Thyroid gland (tissue), 4 donors: ENCODE measurements at regions of chr1 and their contacts with region 1.

Region 1: GRCh38 chr1:43763497-43763973 is 56.2 kb downstream of the ST3GAL3 start:
- DNase-seq: peak; percentile 77 to 80
- H3K4me3 ChIP-seq: no peak overlapping the region
- H3K27ac ChIP-seq: no peak overlapping the region
- H3K4me1 ChIP-seq: peaks cover 15 to 24% of the 10 kb centered on the region in 2 donors
- H3K27me3 ChIP-seq: no peaks in the 10 kb centered on the region
- CTCF ChIP-seq: peak; percentile 57 to 96 (median 88)
- POLR2A ChIP-seq: no peak

Region 2: DNA sequence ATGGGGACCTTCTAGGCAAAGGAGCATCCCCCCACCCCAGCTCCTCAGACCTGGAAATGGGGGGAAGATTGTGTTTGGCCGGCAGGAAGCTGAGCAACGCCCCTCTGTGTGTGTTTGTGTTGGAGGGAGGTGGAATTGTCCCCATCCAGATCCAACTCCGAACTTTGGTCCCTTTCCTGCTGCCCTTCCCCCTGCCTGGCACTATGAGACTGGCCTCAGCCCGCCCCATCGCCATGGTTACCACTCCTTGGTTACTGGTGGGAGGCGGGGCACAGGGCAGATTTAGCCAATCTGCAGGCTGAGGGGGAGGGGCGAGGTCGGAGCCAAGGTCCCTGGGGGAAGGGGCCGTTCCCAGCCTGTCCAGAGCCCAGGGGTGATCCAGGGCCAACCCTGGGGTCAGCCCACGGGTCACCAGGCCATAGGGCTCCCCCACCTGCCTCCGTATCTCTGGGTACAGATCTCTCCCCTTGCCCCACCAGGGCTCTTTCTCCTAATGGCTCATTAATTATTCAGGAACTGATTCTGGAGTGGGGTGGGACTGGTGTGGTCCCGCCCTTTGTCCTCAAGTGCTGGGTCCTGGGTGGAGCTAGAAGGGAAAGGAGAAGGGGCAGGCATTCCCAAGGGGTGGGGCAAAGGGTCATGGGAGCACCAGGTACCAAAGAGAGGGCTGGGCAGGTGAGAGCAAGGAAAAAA is 217.7 kb before region 1 on chr1:
- intact Hi-C with region 1: no loop called
- DNase-seq: peak; percentile 84 to 88
- H3K4me3 ChIP-seq: no peak overlapping the region
- H3K27ac ChIP-seq: peak overlapping the region in 1 of 3 donors; percentile 3
- H3K4me1 ChIP-seq: peaks cover 33 to 89% of the 10 kb centered on the region in 2 donors
- H3K27me3 ChIP-seq: no peaks in the 10 kb centered on the region
- CTCF ChIP-seq: no peak
- POLR2A ChIP-seq: no peak

Region 3: GRCh38 chr1:43934101-43934985 is 170.8 kb after region 1 on chr1:
- intact Hi-C with region 1: loop called (anchors 2 kb)
- DNase-seq: peak; percentile 52 to 53
- H3K4me3 ChIP-seq: peak overlapping the region in 1 of 3 donors; percentile 23
- H3K27ac ChIP-seq: no peak overlapping the region
- H3K4me1 ChIP-seq: peaks cover 10 to 35% of the 10 kb centered on the region in 2 donors
- H3K27me3 ChIP-seq: no peaks in the 10 kb centered on the region
- CTCF ChIP-seq: peak; percentile 72 to 81 (median 76)
- POLR2A ChIP-seq: no peak